ENCODE measurements at regions of chr1 and their contacts with region 1.

Region 1: DNA sequence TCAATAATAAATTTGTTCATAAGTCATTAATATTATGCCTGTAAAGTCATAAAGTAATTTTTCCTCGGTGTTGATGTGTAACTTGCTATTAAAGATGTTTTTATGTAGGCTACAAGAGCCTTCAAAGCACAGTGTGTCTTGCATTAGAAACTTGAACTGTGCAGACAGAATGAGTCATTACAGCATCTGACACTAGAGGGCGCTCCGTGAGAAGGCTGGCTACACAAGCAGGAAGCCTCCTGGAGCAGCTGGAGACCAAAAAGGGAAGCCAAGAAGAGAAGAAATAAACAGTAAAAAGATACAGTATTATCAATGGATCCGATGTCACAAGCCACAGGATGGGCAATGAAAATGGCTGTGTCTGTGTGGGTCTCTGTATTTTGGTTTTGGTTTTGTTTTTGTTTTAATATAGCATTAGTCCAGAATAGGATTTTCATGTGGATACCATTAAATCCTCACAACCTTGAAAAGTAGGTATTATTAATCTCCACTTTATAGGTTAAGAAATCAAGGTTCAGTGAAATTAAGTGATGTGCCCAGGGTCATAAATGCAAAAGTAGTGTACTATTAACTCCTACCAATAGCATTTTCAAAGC is 16.1 kb upstream of the LRRC8D start:
- DNase-seq: peak; percentile 64 to 83 (median 80)
- ATAC-seq: peak; percentile 98
- H3K4me3 ChIP-seq: no peak overlapping the region
- H3K4me3 Mint-ChIP-seq: no peak overlapping the region
- H3K27ac ChIP-seq: no peak overlapping the region
- H3K27ac Mint-ChIP-seq: no peak overlapping the region
- H3K4me1 ChIP-seq: no peaks in the 10 kb centered on the region
- H3K4me1 Mint-ChIP-seq: peaks cover 0 to 6% (median 0%) of the 10 kb centered on the region in 7 donors
- H3K27me3 ChIP-seq: no peaks in the 10 kb centered on the region
- H3K27me3 Mint-ChIP-seq: peaks cover 0 to 7% (median 0%) of the 10 kb centered on the region in 5 donors

Region 2: GRCh38 chr1:89519779-89520358 is 284.9 kb before region 1 on chr1:
- CTCF ChIA-PET with region 1: no interaction called
- POLR2A ChIA-PET with region 1: no interaction called
- intact Hi-C with region 1: no loop called
- DNase-seq: peak in 7 of 9 donors; percentile 28 to 63 (median 56)
- ATAC-seq: peak; percentile 54
- H3K4me3 ChIP-seq: no peak overlapping the region
- H3K4me3 Mint-ChIP-seq: no peak overlapping the region
- H3K27ac ChIP-seq: no peak overlapping the region
- H3K27ac Mint-ChIP-seq: no peak overlapping the region
- H3K4me1 ChIP-seq: peaks cover 0 to 12% of the 10 kb centered on the region in 2 donors
- H3K4me1 Mint-ChIP-seq: peaks cover 5 to 19% (median 9%) of the 10 kb centered on the region in 7 donors
- H3K27me3 ChIP-seq: no peaks in the 10 kb centered on the region
- H3K27me3 Mint-ChIP-seq: peaks cover 0 to 2% (median 0%) of the 10 kb centered on the region in 5 donors

Region 3: DNA sequence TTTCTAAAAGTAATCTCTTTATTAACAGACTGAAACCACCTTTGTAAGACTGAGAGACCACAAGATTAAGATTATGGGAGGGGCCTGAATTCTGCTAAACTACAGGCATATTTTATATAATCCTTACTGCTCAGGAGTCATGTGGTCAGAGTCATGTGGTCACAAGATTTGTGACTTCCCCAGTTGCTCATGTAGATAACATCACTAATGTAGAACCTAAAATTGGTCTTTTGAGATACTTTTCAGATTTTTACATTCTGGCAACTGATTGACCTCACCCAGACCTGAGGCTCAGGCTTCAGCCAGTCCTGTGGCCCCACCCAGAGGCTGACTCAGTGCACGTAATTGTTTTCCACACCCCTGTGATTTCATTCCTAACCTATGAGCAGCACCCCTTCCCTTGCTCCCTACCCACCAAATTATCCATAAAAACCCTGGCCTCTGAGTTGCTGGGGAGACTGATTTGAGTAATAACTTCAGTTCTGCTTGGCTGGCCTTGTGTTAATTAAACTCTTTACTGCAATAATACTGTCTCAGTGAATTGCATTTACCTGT is 148.4 kb after region 1 on chr1:
- CTCF ChIA-PET with region 1: interaction called, 3 read pairs
- POLR2A ChIA-PET with region 1: no interaction called
- intact Hi-C with region 1: loop called in 1 of 2 experiments (anchors 1 kb)
- DNase-seq: peak in 3 of 9 donors; percentile 5 to 24 (median 6)
- ATAC-seq: peak; percentile 60
- H3K4me3 ChIP-seq: no peak overlapping the region
- H3K4me3 Mint-ChIP-seq: no peak overlapping the region
- H3K27ac ChIP-seq: no peak overlapping the region
- H3K27ac Mint-ChIP-seq: peak overlapping the region in 3 of 9 donors; percentile 6 to 50 (median 25)
- H3K4me1 ChIP-seq: peaks cover 0 to 10% of the 10 kb centered on the region in 2 donors
- H3K4me1 Mint-ChIP-seq: peaks cover 10 to 39% (median 17%) of the 10 kb centered on the region in 7 donors
- H3K27me3 ChIP-seq: no peaks in the 10 kb centered on the region
- H3K27me3 Mint-ChIP-seq: peaks cover 0 to 1% (median 0%) of the 10 kb centered on the region in 5 donors

Region 4: GRCh38 chr1:89987170-89987819 is 182.6 kb after region 1 on chr1:
- CTCF ChIA-PET with region 1: interaction called, 47 read pairs
- POLR2A ChIA-PET with region 1: no interaction called
- intact Hi-C with region 1: loop called (anchors 1 kb)
- DNase-seq: peak in 8 of 9 donors; percentile 48 to 76 (median 70)
- ATAC-seq: peak; percentile 97
- H3K4me3 ChIP-seq: no peak overlapping the region
- H3K4me3 Mint-ChIP-seq: no peak overlapping the region
- H3K27ac ChIP-seq: no peak overlapping the region
- H3K27ac Mint-ChIP-seq: no peak overlapping the region
- H3K4me1 ChIP-seq: no peaks in the 10 kb centered on the region
- H3K4me1 Mint-ChIP-seq: no peaks in the 10 kb centered on the region
- H3K27me3 ChIP-seq: no peaks in the 10 kb centered on the region
- H3K27me3 Mint-ChIP-seq: peaks cover 0 to 13% (median 4%) of the 10 kb centered on the region in 5 donors

Region 5: DNA sequence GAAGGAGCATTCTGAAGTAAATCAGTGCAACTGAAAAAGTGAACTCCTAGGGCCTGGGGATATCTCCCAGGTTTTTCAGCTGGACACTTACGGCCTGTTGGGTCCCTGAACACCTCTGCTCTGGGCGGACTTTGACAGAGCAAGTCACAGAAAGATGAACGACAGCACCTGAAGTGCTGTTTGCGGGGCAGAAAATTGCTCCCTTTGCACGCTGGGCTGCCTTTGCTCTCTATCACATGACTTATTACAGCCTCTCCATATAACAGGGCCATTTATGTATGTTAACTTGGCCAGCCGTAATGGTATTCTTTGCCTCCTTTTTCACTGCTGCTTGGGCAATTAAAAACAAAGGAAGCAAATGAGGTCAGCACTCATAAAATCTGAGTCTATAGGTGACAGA is 579.5 kb after region 1 on chr1:
- CTCF ChIA-PET with region 1: no interaction called
- POLR2A ChIA-PET with region 1: no interaction called
- intact Hi-C with region 1: no loop called
- DNase-seq: no peak
- ATAC-seq: no peak
- H3K4me3 ChIP-seq: no peak overlapping the region
- H3K4me3 Mint-ChIP-seq: no peak overlapping the region
- H3K27ac ChIP-seq: no peak overlapping the region
- H3K27ac Mint-ChIP-seq: no peak overlapping the region
- H3K4me1 ChIP-seq: no peaks in the 10 kb centered on the region
- H3K4me1 Mint-ChIP-seq: no peaks in the 10 kb centered on the region
- H3K27me3 ChIP-seq: no peaks in the 10 kb centered on the region
- H3K27me3 Mint-ChIP-seq: peaks cover 0 to 6% (median 0%) of the 10 kb centered on the region in 5 donors